A673 (cell line): ENCODE measurements at regions of chr5 and their contacts with region 1.

Region 1: DNA sequence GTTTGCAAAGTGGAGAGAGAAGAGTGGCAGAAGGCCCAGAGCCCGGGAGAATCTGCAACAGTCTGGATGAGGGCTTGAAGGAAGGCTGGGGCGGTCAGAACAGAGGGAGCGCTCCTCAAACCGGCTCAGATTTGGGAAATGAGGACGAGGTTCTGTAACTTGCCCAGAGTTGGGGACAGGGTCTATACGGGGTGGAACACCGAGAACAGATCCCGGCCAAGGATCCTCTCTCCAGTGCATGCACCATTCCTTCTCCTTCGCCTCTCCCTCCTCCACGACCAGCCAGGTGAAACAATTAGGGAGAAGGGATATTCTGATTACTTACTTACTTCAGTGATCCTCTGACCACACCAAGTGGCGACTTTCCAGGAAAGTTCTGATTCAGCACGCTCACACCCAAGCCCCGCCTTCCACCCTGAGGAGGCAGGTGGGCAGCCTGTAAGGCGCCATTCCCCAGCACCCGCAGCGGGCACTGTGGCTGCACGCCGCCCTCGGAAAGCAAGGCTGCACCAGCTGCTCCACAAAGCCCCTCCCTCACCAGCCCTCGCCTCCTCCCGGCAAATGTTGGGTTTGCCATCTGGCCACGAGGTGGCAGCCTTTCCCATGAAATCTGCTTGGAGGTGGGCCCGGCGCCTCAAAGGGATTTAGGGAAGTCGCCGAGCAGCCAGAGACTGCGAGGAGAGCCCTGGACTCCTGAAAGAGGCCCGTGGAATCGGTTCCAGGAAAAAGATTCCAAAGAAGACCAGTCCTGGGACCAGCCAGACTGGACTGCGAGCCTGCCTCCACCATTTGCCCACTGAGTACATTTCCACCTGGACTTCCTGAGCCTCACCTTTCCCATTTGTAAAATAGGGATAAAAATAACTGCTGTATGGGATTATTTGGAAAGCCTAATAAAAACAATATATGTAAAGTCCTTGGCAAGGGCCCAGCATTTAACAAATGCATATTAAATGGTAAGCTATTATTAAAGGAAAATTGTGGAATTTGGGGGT is 22.2 kb upstream of the WWC1 start:
- DNase-seq: peak; percentile 92
- H3K4me3 ChIP-seq: peak overlapping the region; percentile 30
- H3K27ac ChIP-seq: no peak overlapping the region
- H3K4me1 ChIP-seq: peaks cover 5% of the 10 kb centered on the region
- H3K27me3 ChIP-seq: no peaks in the 10 kb centered on the region
- CTCF ChIP-seq: peak; percentile 85

Region 2: DNA sequence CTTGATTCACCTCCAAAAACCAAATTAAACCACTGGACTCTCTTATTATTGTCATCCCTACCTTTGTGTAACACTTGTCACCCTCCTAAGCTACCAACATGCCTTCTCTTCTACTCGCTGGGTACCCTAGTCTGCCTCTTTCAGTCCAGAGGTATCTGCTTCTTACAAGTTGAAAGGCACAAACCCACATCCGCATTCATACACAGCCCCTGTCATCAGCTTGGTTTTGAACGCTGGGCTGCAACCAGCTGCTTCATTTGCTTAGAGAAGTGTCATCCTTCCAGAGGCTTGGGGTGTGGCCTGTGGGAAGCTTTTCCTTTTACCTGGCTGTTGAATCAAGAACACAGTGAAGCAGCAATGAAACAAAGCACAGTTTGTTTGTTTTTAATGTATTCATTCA is 116.6 kb before region 1 on chr5:
- CTCF ChIA-PET with region 1: no interaction called
- POLR2A ChIA-PET with region 1: no interaction called
- intact Hi-C with region 1: no loop called
- DNase-seq: no peak
- H3K4me3 ChIP-seq: no peak overlapping the region
- H3K27ac ChIP-seq: no peak overlapping the region
- H3K4me1 ChIP-seq: no peaks in the 10 kb centered on the region
- H3K27me3 ChIP-seq: no peaks in the 10 kb centered on the region
- CTCF ChIP-seq: no peak

Region 3: GRCh38 chr5:168346441-168346840 is 77.2 kb after region 1 on chr5:
- CTCF ChIA-PET with region 1: no interaction called
- POLR2A ChIA-PET with region 1: no interaction called
- intact Hi-C with region 1: no loop called
- DNase-seq: no peak
- H3K4me3 ChIP-seq: no peak overlapping the region
- H3K27ac ChIP-seq: no peak overlapping the region
- H3K4me1 ChIP-seq: no peaks in the 10 kb centered on the region
- H3K27me3 ChIP-seq: no peaks in the 10 kb centered on the region
- CTCF ChIP-seq: no peak

Region 4: DNA sequence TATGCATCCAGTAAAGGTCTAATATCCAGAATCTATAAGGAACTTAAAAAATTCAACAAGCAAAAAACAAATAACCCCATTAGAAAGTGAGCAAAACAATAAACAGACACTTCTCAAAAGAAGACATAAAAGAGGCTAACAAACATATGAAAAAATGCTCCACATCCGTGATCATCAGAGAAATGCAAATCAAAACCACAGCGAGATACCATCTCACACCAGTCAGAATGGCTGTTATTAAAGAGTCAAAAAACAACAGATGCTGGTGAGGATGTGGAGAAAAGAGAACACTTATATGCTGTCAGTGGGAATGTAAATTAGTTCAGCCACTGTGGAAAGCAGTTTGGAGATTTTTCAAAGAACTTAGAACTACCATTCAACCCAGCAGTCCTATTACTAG is 108.3 kb after region 1 on chr5:
- CTCF ChIA-PET with region 1: no interaction called
- POLR2A ChIA-PET with region 1: no interaction called
- intact Hi-C with region 1: no loop called
- DNase-seq: no peak
- H3K4me3 ChIP-seq: no peak overlapping the region
- H3K27ac ChIP-seq: no peak overlapping the region
- H3K4me1 ChIP-seq: no peaks in the 10 kb centered on the region
- H3K27me3 ChIP-seq: no peaks in the 10 kb centered on the region
- CTCF ChIP-seq: no peak

Region 5: GRCh38 chr5:168486136-168486879 is 217.1 kb after region 1 on chr5 and contains the start of gene RARS1:
- CTCF ChIA-PET with region 1: no interaction called
- POLR2A ChIA-PET with region 1: no interaction called
- intact Hi-C with region 1: loop called (anchors 2 kb)
- DNase-seq: peak; percentile 92
- H3K4me3 ChIP-seq: peak within 1 kb of the TSS; percentile 96
- H3K27ac ChIP-seq: peak within 1 kb of the TSS; percentile 34
- H3K4me1 ChIP-seq: no peaks in the 10 kb centered on the region
- H3K27me3 ChIP-seq: no peaks in the 10 kb centered on the region
- CTCF ChIP-seq: peak; percentile 91
- total RNA-seq, gene RARS1: 100 and 105 TPM in 2 replicates